OCI-LY7 (cell line): ENCODE measurements at regions of chr3 and their contacts with region 1.

Region 1: DNA sequence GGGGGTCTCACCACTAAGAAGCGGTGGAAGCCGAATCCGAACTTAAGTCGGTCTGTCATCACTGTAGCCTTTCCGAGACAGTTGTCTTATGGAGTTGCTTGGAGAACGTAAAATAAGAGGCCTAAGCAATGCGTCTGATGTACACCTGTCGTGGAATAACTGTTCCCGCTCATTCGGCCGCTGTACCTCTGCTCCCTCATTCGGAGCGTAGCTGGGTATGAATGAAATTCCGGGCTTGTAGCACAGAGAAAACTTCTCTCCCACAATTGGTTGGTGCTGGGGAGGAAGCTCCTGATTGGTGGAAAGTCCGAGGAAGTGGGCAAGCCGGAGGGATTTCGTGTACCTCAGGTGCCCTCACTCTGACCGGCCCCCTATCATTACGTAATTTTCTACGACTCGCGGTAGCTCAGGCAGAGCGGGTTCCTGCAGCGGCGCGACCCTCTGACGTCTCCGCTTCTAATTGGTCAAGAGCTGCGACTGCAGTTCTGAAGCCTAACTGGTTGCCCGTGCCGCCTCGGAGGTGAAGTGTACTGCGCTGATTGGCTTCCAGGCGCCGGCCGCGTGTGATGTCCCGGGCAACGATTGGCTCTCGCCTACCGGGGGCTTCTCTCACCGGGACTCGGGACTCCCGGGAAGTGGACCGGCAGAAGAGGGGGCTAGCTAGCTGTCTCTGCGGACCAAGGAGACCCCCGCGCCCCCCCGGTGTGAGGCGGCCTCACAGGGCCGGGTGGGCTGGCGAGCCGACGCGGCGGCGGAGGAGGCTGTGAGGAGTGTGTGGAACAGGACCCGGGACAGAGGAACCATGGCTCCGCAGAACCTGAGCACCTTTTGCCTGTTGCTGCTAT is at the start of gene DNAJB11:
- DNase-seq: peak; percentile 100
- H3K4me3 ChIP-seq: peak within 1 kb of the TSS; percentile 84
- H3K27ac ChIP-seq: peak within 1 kb of the TSS; percentile 60
- H3K4me1 ChIP-seq: peaks cover 34% of the 10 kb centered on the region
- CTCF ChIP-seq: no peak
- total RNA-seq, gene DNAJB11: 73.0 and 78.7 TPM in 2 replicates

Region 2: DNA sequence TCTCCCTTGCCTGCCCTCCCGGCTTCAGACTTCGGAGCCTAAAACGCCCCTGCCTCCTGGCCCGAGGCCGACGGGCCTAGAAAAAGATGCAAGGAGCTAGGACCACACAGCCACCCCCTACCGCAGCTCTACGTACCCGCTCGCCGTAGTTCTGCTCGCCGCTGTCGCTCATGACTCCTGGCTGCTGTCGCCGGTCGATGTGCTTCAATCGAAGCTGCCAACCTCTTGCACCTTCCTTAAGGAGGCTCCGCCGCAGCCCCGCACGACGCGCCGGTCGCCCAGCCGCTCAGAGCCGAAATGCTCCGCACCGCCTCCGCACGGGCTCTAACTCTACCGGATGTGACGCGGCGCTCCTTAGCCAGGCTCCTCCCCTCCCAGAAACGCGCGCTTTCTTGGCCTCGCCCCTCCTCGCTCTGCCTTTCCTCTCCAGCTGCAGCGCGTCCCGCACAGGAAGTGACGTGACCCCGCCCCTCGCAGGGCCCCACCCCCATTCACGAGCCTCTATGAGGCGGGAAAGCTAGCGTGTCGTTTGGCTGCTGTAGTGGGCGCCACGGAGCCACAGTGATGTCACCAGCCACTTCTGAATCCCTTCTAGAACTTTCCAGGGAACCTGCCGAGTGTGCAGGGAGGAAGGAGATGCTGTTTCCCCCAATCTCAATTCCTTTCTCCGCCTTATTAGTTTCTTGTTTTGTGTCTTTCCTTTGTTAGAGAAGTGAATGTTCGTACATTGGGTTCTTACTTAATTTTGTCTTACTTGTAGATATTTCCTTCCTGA is 632.4 kb before region 1 on chr3 and contains the start of gene TRA2B:
- CTCF ChIA-PET with region 1: no interaction called
- POLR2A ChIA-PET with region 1: interaction called, 7 read pairs
- intact Hi-C with region 1: loop called (anchors 5 kb)
- DNase-seq: peak; percentile 98
- H3K4me3 ChIP-seq: peak within 1 kb of the TSS; percentile 92
- H3K27ac ChIP-seq: peak within 1 kb of the TSS; percentile 88
- H3K4me1 ChIP-seq: peaks cover 22% of the 10 kb centered on the region
- CTCF ChIP-seq: peak; percentile 62
- total RNA-seq, gene TRA2B: 349 and 420 TPM in 2 replicates

Region 3: GRCh38 chr3:186534113-186534669 is 36.1 kb before region 1 on chr3:
- CTCF ChIA-PET with region 1: interaction called, 3 read pairs
- POLR2A ChIA-PET with region 1: interaction called, 17 read pairs
- intact Hi-C with region 1: no loop called
- DNase-seq: peak; percentile 81
- H3K4me3 ChIP-seq: peak overlapping the region; percentile 20
- H3K27ac ChIP-seq: peak overlapping the region; percentile 76
- H3K4me1 ChIP-seq: peaks cover 58% of the 10 kb centered on the region
- CTCF ChIP-seq: no peak

Region 4: DNA sequence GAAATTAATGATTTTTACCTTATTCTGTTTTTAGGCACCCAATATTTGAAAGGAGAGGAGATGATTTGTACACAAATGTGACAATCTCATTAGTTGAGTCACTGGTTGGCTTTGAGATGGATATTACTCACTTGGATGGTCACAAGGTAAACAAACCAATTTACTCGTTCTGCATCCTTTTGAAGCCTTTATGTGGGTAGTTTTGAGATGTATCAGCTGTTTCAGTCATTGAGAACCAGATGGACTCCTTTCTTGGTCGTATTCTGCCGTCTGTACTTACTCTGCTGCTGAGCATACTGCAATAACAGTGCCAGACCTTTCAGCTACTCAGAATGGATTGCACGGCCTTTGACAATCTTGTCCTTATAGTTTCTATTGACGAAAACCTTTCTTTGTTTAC is 13.5 kb after region 1 on chr3:
- CTCF ChIA-PET with region 1: no interaction called
- POLR2A ChIA-PET with region 1: interaction called, 11 read pairs
- intact Hi-C with region 1: no loop called
- DNase-seq: no peak
- H3K4me3 ChIP-seq: no peak overlapping the region
- H3K27ac ChIP-seq: no peak overlapping the region
- H3K4me1 ChIP-seq: no peaks in the 10 kb centered on the region
- CTCF ChIP-seq: no peak

Region 5: DNA sequence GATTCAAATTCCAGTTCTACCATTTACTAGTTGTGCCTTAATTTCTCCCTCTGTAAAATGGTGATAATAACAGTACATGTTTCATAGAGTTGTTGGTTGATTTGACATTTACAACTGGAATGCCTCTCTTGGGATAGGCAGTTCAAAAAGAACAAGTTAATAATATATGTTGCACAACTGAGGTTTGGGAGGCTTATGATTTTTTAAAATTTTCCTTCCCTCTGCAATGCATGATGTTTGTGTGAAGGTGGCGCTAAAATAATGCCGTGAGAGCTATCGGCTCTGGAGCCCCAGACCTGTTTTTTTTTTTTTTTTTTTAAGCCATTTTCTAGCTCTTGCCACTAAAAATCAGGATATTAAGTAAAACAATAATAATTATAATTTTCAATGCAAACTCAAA is 18.8 kb after region 1 on chr3:
- CTCF ChIA-PET with region 1: no interaction called
- POLR2A ChIA-PET with region 1: interaction called, 11 read pairs
- intact Hi-C with region 1: no loop called
- DNase-seq: peak; percentile 49
- H3K4me3 ChIP-seq: no peak overlapping the region
- H3K27ac ChIP-seq: no peak overlapping the region
- H3K4me1 ChIP-seq: no peaks in the 10 kb centered on the region
- CTCF ChIP-seq: peak; percentile 82

Region 6: DNA sequence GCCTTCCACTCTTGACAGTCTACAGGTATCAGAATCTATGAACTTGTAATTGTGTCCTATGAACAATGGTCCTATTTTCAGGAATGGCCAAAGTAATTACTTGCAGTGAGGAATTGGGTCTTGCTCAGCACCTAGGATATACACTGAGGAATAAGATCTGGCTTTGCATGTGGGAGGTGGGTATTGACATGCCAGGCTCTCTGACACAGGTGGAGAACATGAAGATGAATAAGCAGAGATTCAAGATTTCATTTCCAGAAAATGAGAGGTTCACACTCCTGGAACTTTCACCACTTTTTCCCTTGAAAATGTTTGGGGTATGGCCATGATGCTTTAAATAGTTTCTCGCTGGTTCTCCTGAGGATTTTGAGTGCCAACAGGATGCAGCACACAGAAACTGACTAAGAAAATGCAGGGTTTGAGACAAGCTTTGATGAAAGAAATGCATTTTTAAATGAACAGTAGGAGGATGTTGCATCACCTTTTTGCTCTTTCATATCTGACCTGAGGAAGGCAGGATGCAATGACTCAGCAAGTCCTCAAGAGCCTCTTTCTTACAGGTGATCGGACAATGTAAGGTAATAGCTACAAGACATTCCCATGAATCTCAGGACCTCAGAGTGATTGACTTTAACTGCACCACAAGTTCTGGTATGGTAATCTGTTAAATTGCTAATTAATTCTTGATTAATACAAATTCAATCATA is 99.2 kb after region 1 on chr3:
- CTCF ChIA-PET with region 1: no interaction called
- POLR2A ChIA-PET with region 1: no interaction called
- intact Hi-C with region 1: no loop called
- DNase-seq: peak; percentile 37
- H3K4me3 ChIP-seq: no peak overlapping the region
- H3K27ac ChIP-seq: no peak overlapping the region
- H3K4me1 ChIP-seq: peaks cover 12% of the 10 kb centered on the region
- CTCF ChIP-seq: no peak

Region 7: DNA sequence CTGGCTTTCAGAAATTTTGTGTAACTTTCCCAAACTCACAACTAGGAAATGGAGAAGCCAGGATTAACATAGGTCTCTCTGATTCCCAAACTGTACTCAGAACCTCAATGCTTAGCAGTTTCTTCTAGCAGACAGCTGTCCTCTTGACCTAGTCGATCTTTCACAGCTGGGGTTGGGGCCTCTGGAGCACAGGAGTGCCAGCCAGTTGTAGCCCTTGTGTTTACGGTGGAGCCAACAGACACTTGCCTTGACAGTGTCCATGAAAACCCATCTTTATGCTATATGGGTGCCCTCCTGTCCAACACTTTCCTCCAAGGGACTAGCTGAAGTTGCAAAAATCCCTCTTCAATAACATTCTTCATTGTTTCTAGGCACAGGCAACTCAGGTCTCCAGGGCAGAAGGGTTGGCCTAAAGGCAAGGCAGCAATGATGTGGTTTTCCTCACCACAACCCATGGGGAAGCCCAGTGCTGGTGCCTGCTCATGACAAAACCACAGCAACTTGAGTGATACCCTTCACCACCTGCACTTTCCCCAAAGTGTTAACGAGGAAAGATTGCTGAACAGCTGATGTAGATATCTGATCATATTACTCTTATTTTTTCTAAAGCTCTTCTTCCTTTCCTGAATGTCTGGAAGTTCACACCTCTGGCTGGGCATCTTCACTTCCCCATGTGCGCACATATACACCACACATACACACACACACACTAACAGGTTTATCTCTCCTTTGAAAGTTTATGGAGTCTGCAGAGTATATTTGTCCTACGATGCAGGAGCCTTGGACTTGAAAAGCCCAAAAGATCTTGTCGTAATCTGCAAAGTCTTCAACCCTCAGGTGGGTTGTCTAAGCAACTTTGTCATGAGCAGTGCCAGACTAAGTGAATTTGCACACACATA is 135.8 kb after region 1 on chr3:
- CTCF ChIA-PET with region 1: no interaction called
- POLR2A ChIA-PET with region 1: no interaction called
- intact Hi-C with region 1: no loop called
- DNase-seq: no peak
- H3K4me3 ChIP-seq: no peak overlapping the region
- H3K27ac ChIP-seq: no peak overlapping the region
- H3K4me1 ChIP-seq: no peaks in the 10 kb centered on the region
- CTCF ChIP-seq: no peak

Region 8: DNA sequence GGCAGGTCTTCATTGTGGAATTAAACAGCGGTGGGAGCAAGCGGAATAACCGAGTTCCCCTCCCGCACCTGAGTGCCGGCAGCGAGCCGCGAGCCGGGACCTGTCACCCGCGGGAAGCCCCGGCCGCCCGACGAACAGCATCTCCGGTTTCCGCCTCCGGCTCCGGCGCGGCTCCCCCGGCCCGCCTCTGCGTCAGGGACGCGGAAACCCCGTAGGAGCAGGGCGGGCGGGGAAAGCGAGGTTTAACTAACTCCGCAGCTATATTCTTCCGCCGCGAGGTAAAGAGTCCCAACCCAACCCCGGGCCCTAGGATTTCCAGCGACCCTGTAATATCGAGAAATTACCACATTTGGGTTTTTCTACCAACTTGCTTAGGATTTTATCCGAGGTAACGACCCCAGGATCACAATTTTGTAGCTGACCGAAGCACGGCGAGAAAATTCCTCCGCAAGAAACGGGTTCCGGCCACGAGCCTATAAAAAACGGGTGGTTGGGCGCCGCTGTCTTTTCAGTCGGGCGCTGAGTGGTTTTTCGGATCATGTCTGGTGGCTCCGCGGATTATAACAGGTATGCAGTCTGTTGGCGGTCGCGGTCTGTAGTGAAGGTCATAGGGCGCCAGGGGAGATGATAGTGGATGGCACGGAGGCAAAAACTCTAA is 212.9 kb after region 1 on chr3 and contains the start of gene EIF4A2:
- CTCF ChIA-PET with region 1: no interaction called
- POLR2A ChIA-PET with region 1: interaction called, 18 read pairs
- intact Hi-C with region 1: loop called (anchors 2 kb)
- DNase-seq: peak; percentile 95
- H3K4me3 ChIP-seq: peak within 1 kb of the TSS; percentile 98
- H3K27ac ChIP-seq: peak within 1 kb of the TSS; percentile 99
- H3K4me1 ChIP-seq: peaks cover 43% of the 10 kb centered on the region
- CTCF ChIP-seq: no peak
- total RNA-seq, gene EIF4A2: 506 and 596 TPM in 2 replicates

Region 9: GRCh38 chr3:186806089-186807055 is 236.1 kb after region 1 on chr3 and contains the start of gene RFC4:
- CTCF ChIA-PET with region 1: no interaction called
- POLR2A ChIA-PET with region 1: interaction called, 14 read pairs
- intact Hi-C with region 1: loop called (anchors 5 kb)
- DNase-seq: peak; percentile 90
- H3K4me3 ChIP-seq: peak within 1 kb of the TSS; percentile 86
- H3K27ac ChIP-seq: peak within 1 kb of the TSS; percentile 78
- H3K4me1 ChIP-seq: peaks cover 20% of the 10 kb centered on the region
- CTCF ChIP-seq: no peak
- total RNA-seq, gene RFC4: 114 and 137 TPM in 2 replicates